ENCODE measurements at regions of chr1 and their contacts with region 1.

Region 1: DNA sequence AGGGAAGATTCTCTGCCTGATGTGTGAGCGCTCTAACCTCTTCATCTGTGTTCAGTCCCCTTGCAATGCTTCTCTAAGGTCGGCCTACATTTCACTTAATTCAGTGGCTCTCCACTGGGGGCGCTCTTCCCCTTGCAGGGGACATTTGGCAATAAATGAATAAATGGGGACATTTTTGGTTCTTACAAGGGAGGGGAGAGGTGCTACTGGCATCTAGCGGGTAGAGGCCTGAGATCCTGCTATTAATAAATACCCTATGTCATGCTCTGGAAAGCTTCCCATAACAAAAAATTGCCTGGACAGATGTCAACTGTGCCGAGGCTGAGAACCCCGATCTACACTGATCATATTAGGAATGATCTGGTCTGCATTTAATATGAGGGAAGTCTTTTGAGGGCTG is 25.9 kb upstream of the DNAJC11 start:
- DNase-seq: peak; percentile 58
- H3K4me3 Mint-ChIP-seq: no peak overlapping the region
- H3K27ac Mint-ChIP-seq: no peak overlapping the region
- H3K4me1 Mint-ChIP-seq: no peaks in the 10 kb centered on the region
- H3K27me3 Mint-ChIP-seq: peaks cover 36% of the 10 kb centered on the region
- CTCF ChIP-seq: peak; percentile 66

Region 2: GRCh38 chr1:6587261-6588005 is 140.1 kb before region 1 on chr1:
- CTCF ChIA-PET with region 1: no interaction called
- intact Hi-C with region 1: no loop called
- DNase-seq: no peak
- H3K4me3 Mint-ChIP-seq: no peak overlapping the region
- H3K27ac Mint-ChIP-seq: no peak overlapping the region
- H3K4me1 Mint-ChIP-seq: no peaks in the 10 kb centered on the region
- H3K27me3 Mint-ChIP-seq: no peaks in the 10 kb centered on the region
- CTCF ChIP-seq: no peak

Region 3: DNA sequence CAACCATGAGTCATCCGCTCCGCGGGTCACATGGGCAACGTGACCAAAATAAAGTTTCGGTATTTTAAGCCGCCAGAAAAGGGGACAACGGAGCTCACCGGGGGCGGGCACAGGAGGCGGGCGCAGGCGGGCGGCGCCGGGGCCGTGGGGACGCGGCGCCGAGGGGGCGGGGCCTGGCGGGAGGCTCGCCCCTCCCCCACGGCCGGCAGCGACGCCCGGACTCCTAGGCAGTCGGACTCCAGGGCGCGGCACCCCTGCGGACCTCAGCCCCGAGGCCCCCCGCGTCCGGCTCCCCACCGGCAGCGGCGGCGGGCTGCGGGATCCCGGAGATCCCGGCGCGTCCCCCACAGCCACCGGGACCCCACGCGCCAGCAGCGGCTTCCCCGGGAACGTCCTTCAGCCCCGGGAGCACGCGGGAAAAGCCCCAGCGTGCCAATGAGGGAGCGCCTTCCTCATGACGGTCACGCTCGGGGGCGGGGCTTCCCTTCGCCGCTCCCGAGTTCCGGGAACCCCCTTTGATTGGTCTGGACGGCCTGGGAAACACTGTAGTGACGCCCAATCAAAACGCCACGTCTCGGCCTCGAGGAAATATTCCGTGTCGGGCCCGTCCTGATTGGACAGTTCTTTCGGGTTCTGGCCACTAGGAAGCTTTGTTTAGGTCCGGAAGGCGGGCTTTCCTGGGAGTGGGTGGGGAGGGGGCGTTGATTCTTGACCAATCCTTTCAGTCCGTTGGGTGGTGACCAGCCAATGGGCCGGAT is 57.2 kb after region 1 on chr1:
- CTCF ChIA-PET with region 1: no interaction called
- intact Hi-C with region 1: loop called (anchors 5 kb)
- DNase-seq: peak; percentile 97
- H3K4me3 Mint-ChIP-seq: peak overlapping the region; percentile 80
- H3K27ac Mint-ChIP-seq: peak overlapping the region; percentile 88
- H3K4me1 Mint-ChIP-seq: peaks cover 38% of the 10 kb centered on the region
- H3K27me3 Mint-ChIP-seq: no peaks in the 10 kb centered on the region
- CTCF ChIP-seq: no peak

Region 4: GRCh38 chr1:6819246-6820040 is 91.9 kb after region 1 on chr1:
- CTCF ChIA-PET with region 1: no interaction called
- intact Hi-C with region 1: no loop called
- DNase-seq: no peak
- H3K4me3 Mint-ChIP-seq: no peak overlapping the region
- H3K27ac Mint-ChIP-seq: no peak overlapping the region
- H3K4me1 Mint-ChIP-seq: peaks cover 42% of the 10 kb centered on the region
- H3K27me3 Mint-ChIP-seq: no peaks in the 10 kb centered on the region
- CTCF ChIP-seq: no peak

Region 5: GRCh38 chr1:6889875-6890480 is 162.4 kb after region 1 on chr1:
- CTCF ChIA-PET with region 1: no interaction called
- intact Hi-C with region 1: loop called (anchors 2 kb)
- DNase-seq: peak; percentile 57
- H3K4me3 Mint-ChIP-seq: no peak overlapping the region
- H3K27ac Mint-ChIP-seq: no peak overlapping the region
- H3K4me1 Mint-ChIP-seq: peaks cover 9% of the 10 kb centered on the region
- H3K27me3 Mint-ChIP-seq: no peaks in the 10 kb centered on the region
- CTCF ChIP-seq: peak; percentile 56

Region 6: GRCh38 chr1:7218210-7218832 is 490.8 kb after region 1 on chr1:
- CTCF ChIA-PET with region 1: no interaction called
- intact Hi-C with region 1: loop called (anchors 5 kb)
- DNase-seq: peak; percentile 42
- H3K4me3 Mint-ChIP-seq: no peak overlapping the region
- H3K27ac Mint-ChIP-seq: no peak overlapping the region
- H3K4me1 Mint-ChIP-seq: no peaks in the 10 kb centered on the region
- H3K27me3 Mint-ChIP-seq: peaks cover 28% of the 10 kb centered on the region
- CTCF ChIP-seq: peak; percentile 81